ENCODE measurements at regions of chr1 and their contacts with region 1.

Region 1: DNA sequence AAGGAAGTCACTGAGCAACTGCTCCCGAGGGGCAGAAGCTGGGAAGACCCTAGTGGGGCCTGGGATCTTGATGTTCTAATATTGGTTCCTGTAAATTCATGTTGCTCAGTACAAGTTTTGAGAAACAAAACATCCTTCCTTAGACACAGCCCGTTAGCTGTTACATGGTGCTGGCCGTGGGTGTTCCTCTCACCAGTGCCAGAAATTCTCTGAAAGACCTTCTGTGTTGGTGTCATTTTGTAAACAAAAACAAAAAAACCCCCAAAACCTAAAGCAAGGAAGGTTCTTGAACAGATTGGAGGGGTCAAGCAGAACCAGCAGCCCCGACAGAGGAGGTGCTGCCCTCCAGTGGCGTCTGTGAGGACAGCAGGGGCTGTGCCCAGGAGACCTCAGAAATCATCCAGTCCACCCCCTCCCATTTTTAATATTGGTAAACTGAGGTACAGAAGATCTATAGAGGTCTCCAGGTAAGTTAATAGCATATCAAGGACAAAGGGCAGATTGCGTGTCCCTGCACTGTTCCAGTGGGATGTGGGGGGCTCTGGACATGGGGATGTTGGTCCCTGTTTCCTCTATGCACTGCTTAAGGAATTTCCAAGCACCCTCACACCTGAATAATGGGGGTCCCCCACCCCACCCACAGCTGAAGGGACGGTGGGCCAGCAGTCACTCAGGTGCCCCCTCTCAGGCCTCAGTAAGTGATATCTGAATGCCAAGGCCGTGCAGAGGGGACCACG is 38.2 kb downstream of the SLC2A7 start:
- DNase-seq: peak; percentile 66
- ATAC-seq: peak; percentile 92
- H3K4me3 ChIP-seq: no peak overlapping the region
- H3K4me3 Mint-ChIP-seq: peak overlapping the region; percentile 15
- H3K27ac ChIP-seq: no peak overlapping the region
- H3K27ac Mint-ChIP-seq: no peak overlapping the region
- H3K4me1 ChIP-seq: peaks cover 5 to 15% of the 10 kb centered on the region in 2 donors
- H3K4me1 Mint-ChIP-seq: peaks cover 9% of the 10 kb centered on the region
- H3K27me3 ChIP-seq: peaks cover 0 to 4% (median 0%) of the 10 kb centered on the region in 4 experiments
- H3K27me3 Mint-ChIP-seq: peaks cover 19% of the 10 kb centered on the region
- CTCF ChIP-seq: peak; percentile 97

Region 2: GRCh38 chr1:8858888-8859706 is 129.0 kb before region 1 on chr1:
- CTCF ChIA-PET with region 1: interaction called, 17 read pairs
- POLR2A ChIA-PET with region 1: no interaction called
- intact Hi-C with region 1: loop called (anchors 1 kb)
- DNase-seq: peak; percentile 73
- ATAC-seq: peak; percentile 83
- H3K4me3 ChIP-seq: no peak overlapping the region
- H3K4me3 Mint-ChIP-seq: no peak overlapping the region
- H3K27ac ChIP-seq: no peak overlapping the region
- H3K27ac Mint-ChIP-seq: peak overlapping the region; percentile 18
- H3K4me1 ChIP-seq: peaks cover 7 to 8% of the 10 kb centered on the region in 2 donors
- H3K4me1 Mint-ChIP-seq: peaks cover 18% of the 10 kb centered on the region
- H3K27me3 ChIP-seq: no peaks in the 10 kb centered on the region
- H3K27me3 Mint-ChIP-seq: no peaks in the 10 kb centered on the region
- CTCF ChIP-seq: peak; percentile 77

Region 3: GRCh38 chr1:8913111-8913856 is 74.8 kb before region 1 on chr1:
- CTCF ChIA-PET with region 1: interaction called, 9 read pairs
- POLR2A ChIA-PET with region 1: no interaction called
- intact Hi-C with region 1: loop called (anchors 1 kb)
- DNase-seq: no peak
- ATAC-seq: no peak
- H3K4me3 ChIP-seq: no peak overlapping the region
- H3K4me3 Mint-ChIP-seq: no peak overlapping the region
- H3K27ac ChIP-seq: no peak overlapping the region
- H3K27ac Mint-ChIP-seq: no peak overlapping the region
- H3K4me1 ChIP-seq: no peaks in the 10 kb centered on the region
- H3K4me1 Mint-ChIP-seq: no peaks in the 10 kb centered on the region
- H3K27me3 ChIP-seq: peaks cover 0 to 5% (median 0%) of the 10 kb centered on the region in 4 experiments
- H3K27me3 Mint-ChIP-seq: peaks cover 19% of the 10 kb centered on the region
- CTCF ChIP-seq: no peak

Measured in B cell (primary cell).